Posterior cingulate gyrus (tissue), 11 donors: ENCODE measurements at regions of chr9 and their contacts with region 1.

Region 1: GRCh38 chr9:3525836-3526164 is at the start of gene RFX3:
- DNase-seq: peak; percentile 80 to 98 (median 88)

Region 2: DNA sequence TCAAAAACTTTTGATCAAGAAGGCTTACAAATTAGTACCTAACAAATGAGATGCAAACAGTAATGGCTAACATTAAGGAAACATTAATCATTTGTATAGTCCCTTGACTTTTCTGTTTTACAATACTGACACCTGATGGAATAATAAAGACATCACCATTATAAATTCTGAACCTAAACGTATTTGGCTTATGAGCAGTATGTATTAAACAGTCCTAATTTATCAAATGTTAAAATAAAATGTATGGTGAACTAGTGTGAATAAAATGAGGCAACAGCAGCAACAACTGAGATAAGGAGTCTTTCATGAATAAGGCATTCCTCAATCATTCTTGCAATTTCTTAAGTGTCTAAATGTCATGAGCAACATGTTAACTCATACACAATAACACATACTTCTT is 687.9 kb before region 1 on chr9:
- intact Hi-C with region 1: loop called (anchors 5 kb)
- DNase-seq: no peak

Region 3: GRCh38 chr9:3240656-3241268 is 285.0 kb before region 1 on chr9:
- intact Hi-C with region 1: loop called (anchors 10 kb)
- DNase-seq: peak; percentile 49 to 93 (median 72)

Region 4: GRCh38 chr9:4662108-4662988 is 1136.5 kb after region 1 on chr9 and contains the start of gene PLPP6:
- intact Hi-C with region 1: loop called (anchors 10 kb)
- DNase-seq: peak; percentile 74 to 97 (median 83)